ENCODE measurements at regions of chr17 and their contacts with region 1.

Region 1: DNA sequence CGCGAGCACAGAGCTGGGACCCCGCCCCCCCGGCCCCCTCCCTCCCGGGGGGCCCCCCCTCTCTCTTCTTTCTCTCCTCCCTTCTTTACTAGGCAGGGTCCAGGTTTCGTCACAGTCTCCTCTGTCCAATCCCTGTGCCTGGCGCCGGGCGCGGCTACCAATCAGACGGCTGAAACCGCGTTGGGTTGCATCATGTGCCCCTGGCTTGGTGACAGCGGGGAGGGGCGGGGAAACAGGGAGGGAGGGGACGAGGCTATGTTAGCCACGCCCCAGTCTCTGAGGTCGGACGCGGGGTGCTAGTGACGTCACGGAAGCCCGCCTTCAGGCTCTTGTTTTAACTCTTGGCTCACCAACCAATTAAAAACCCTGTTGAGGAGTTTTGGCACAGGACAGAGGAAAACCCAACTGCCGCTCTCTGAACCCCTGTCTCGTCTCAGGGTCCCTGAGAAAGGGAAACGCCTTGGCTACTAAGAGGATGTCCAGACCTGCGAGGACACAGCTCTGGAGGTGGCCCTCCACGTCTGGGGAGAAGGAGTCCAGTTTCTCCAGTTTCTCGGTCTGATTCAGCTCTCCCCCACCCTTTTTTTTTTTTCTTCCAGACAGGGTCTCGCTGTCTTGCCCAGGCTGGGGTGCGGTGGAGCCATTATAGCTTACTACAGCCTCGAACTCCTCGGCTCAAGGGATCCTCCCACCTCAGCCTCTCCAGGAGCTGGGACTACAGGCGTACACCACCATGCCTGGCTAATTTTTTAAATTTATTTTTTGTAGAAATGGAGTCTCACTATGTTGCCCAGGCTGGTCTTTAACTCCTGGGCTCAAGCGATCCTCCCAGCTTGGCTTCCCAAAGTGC is 439 bp upstream of the PLEKHH3 start:
- DNase-seq: peak; percentile 91 to 97 (median 95)
- H3K4me3 ChIP-seq: peak overlapping the region; percentile 74
- H3K4me3 Mint-ChIP-seq: peak overlapping the region; percentile 87 to 91 (median 88)
- H3K27ac ChIP-seq: peak overlapping the region; percentile 73
- H3K27ac Mint-ChIP-seq: peak overlapping the region; percentile 21 to 98 (median 78)
- H3K4me1 ChIP-seq: peaks cover 72% of the 10 kb centered on the region
- H3K4me1 Mint-ChIP-seq: peaks cover 44 to 66% (median 56%) of the 10 kb centered on the region in 3 donors
- H3K27me3 ChIP-seq: peaks cover 53% of the 10 kb centered on the region
- H3K27me3 Mint-ChIP-seq: peaks cover 40 to 41% of the 10 kb centered on the region in 2 donors

Region 2: GRCh38 chr17:42541041-42541833 is 136.0 kb before region 1 on chr17:
- CTCF ChIA-PET with region 1: no interaction called
- POLR2A ChIA-PET with region 1: no interaction called
- DNase-seq: peak in 2 of 5 donors; percentile 54 to 67
- H3K4me3 ChIP-seq: no peak overlapping the region
- H3K4me3 Mint-ChIP-seq: peak overlapping the region; percentile 23 to 63 (median 50)
- H3K27ac ChIP-seq: no peak overlapping the region
- H3K27ac Mint-ChIP-seq: peak overlapping the region; percentile 29 to 93 (median 70)
- H3K4me1 ChIP-seq: peaks cover 24% of the 10 kb centered on the region
- H3K4me1 Mint-ChIP-seq: peaks cover 22 to 38% (median 24%) of the 10 kb centered on the region in 3 donors
- H3K27me3 ChIP-seq: no peaks in the 10 kb centered on the region
- H3K27me3 Mint-ChIP-seq: no peaks in the 10 kb centered on the region

Region 3: GRCh38 chr17:42609182-42609813 is 67.9 kb before region 1 on chr17 and contains the starts of genes RETREG3 and TUBG1:
- CTCF ChIA-PET with region 1: interaction called, 17 read pairs
- POLR2A ChIA-PET with region 1: interaction called, 10 read pairs
- DNase-seq: peak; percentile 99 to 100 (median 99)
- H3K4me3 ChIP-seq: peak within 1 kb of the TSS; percentile 93
- H3K4me3 Mint-ChIP-seq: peak within 1 kb of the TSS; percentile 99 to 100 (median 99)
- H3K27ac ChIP-seq: peak within 1 kb of the TSS; percentile 88
- H3K27ac Mint-ChIP-seq: peak within 1 kb of the TSS; percentile 96 to 100 (median 98)
- H3K4me1 ChIP-seq: peaks cover 39% of the 10 kb centered on the region
- H3K4me1 Mint-ChIP-seq: peaks cover 42 to 54% (median 54%) of the 10 kb centered on the region in 3 donors
- H3K27me3 ChIP-seq: no peaks in the 10 kb centered on the region
- H3K27me3 Mint-ChIP-seq: no peaks in the 10 kb centered on the region
- total RNA-seq, gene RETREG3: 39.7 to 40.3 TPM
- total RNA-seq, gene TUBG1: 112 to 119 TPM

Region 4: GRCh38 chr17:42846614-42847282 is 169.5 kb after region 1 on chr17:
- CTCF ChIA-PET with region 1: no interaction called
- POLR2A ChIA-PET with region 1: no interaction called
- DNase-seq: no peak
- H3K4me3 ChIP-seq: no peak overlapping the region
- H3K4me3 Mint-ChIP-seq: peak overlapping the region in 1 of 7 donors; percentile 40
- H3K27ac ChIP-seq: no peak overlapping the region
- H3K27ac Mint-ChIP-seq: peak overlapping the region in 3 of 8 donors; percentile 29 to 64 (median 54)
- H3K4me1 ChIP-seq: no peaks in the 10 kb centered on the region
- H3K4me1 Mint-ChIP-seq: peaks cover 0 to 8% (median 6%) of the 10 kb centered on the region in 3 donors
- H3K27me3 ChIP-seq: no peaks in the 10 kb centered on the region
- H3K27me3 Mint-ChIP-seq: peaks cover 0 to 2% of the 10 kb centered on the region in 2 donors

Measured in CD8-positive, alpha-beta memory T cell (primary cell).